Mammary epithelial cell (primary cell): ENCODE measurements at regions of chr12 and their contacts with region 1.

Region 1: DNA sequence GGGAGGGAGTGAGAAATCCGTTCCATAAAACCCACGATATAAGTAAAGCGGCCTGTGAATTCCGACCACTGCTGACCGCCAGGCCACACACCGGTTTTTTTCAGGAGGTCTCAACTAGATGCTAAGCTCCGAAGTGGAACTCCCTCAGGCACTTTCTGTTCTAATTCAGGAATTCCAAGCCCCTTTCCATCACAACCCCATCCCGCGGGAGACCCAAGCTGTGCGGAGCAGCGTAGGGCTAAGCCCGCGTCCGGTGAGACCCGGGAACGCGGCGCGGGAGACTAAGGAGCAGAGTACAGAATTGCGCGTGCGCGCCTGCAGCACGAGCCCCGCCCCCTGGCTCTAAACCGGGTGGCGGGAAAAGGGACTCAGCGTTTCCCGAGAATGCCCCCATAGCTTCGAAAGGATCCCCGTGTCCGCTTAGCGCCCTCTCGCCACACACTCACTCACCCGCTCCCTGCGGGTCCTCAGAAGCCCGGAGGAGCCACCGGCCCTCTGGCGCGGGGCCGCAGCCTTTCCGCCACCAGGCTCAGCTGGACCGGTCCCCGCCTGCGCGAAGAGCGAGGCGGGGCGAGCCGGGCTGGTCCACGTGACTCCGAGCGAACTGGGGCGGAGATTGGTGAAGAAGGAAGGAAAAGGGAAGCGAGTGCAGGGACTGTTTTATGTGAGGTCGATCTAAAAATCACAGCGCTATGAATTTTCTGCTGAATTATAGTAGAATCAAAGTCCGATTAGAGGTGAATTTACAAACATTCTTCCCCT is at the start of gene TIMELESS:
- DNase-seq: peak; percentile 89
- H3K4me3 ChIP-seq: peak within 1 kb of the TSS; percentile 80 to 95 (median 88)
- H3K27ac ChIP-seq: peak within 1 kb of the TSS; percentile 83
- H3K4me1 ChIP-seq: peaks cover 4% of the 10 kb centered on the region
- H3K27me3 ChIP-seq: no peaks in the 10 kb centered on the region
- CTCF ChIP-seq: peak in 1 of 2 donors; percentile 4
- total RNA-seq, gene TIMELESS: 4.5 to 21.7 TPM

Region 2: GRCh38 chr12:56341616-56342015 is 107.4 kb before region 1 on chr12:
- CTCF ChIA-PET with region 1: no interaction called
- dilution Hi-C with region 1: loop called (anchors 5 kb)
- in situ Hi-C with region 1: no loop called
- intact Hi-C with region 1: no loop called
- DNase-seq: no peak
- H3K4me3 ChIP-seq: no peak overlapping the region
- H3K27ac ChIP-seq: no peak overlapping the region
- H3K4me1 ChIP-seq: peaks cover 18% of the 10 kb centered on the region
- H3K27me3 ChIP-seq: no peaks in the 10 kb centered on the region
- CTCF ChIP-seq: no peak

Region 3: DNA sequence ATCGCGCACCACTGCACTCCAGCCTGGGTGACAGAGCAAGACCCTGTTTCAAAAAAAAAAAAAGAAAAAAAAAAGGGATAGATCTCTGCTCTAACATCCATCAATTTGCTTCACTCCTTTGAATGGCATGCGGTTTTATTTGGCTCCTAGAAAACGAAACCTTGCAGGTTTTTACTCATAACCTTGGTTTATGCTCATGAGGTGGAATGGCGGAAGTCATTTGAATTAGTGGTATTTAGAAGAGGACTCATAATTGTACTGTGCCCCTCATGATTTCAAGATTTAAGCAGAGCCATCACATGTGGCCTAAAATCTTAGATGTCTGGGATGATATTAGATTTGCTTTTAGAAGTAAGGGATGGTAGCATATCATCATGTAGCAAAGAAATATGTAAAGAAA is 102.0 kb after region 1 on chr12:
- CTCF ChIA-PET with region 1: no interaction called
- dilution Hi-C with region 1: no loop called
- in situ Hi-C with region 1: no loop called
- intact Hi-C with region 1: no loop called
- DNase-seq: no peak
- H3K4me3 ChIP-seq: no peak overlapping the region
- H3K27ac ChIP-seq: no peak overlapping the region
- H3K4me1 ChIP-seq: no peaks in the 10 kb centered on the region
- H3K27me3 ChIP-seq: no peaks in the 10 kb centered on the region
- CTCF ChIP-seq: no peak